Activated CD4-positive, alpha-beta T cell treated with anti-CD3 and anti-CD28 coated beads for 36 hours (primary cell): ENCODE measurements at regions of chr2 and their contacts with region 1.

Region 1: DNA sequence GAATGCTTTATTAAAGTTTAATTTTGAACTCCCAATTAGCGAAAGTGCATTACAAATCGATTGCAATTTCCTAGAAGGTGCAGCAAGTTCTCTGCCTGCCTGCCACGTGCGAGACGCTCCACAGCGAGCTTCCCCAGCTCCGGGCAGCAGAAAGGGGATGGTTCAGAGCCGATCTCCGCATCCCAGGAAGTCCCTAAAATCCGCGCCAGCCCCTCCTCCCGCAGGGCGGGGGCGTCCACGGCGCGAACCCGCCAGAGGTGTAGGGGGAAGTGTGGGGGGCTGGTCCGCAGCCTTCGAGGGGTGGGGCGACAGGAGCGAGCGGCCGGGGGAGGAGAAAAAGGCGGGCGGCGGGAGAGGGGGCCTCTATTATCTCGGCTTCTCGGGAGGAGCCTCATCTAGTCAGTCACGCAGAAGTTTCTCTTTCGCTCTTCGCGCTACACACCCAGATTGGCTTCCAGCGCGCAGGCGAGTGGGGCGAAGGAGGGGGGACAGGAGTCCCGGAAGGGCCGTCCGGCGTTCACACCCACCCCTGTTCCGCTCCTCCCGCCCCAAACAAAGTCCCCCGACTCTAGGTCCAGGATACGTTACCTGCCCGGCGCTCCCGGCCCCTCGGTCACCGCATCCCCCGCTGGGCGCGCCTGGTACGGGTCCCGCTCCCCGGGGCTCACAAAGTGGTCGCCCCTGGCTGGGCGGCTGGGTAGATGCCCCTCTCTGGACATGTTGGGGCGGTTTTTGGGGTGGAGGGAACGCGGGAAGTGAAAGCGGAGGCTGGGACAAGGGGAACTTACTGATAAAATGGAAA is 9.1 kb upstream of the NR4A2 start:
- DNase-seq: peak; percentile 94
- ATAC-seq: peak; percentile 79
- H3K4me3 Mint-ChIP-seq: peak overlapping the region; percentile 84
- H3K27ac Mint-ChIP-seq: peak overlapping the region; percentile 95
- H3K4me1 Mint-ChIP-seq: peaks cover 53% of the 10 kb centered on the region
- H3K27me3 Mint-ChIP-seq: no peaks in the 10 kb centered on the region

Region 2: GRCh38 chr2:156077041-156077735 is 264.5 kb before region 1 on chr2:
- CTCF ChIA-PET with region 1: no interaction called
- POLR2A ChIA-PET with region 1: no interaction called
- intact Hi-C with region 1: no loop called
- DNase-seq: no peak
- ATAC-seq: no peak
- H3K4me3 Mint-ChIP-seq: no peak overlapping the region
- H3K27ac Mint-ChIP-seq: no peak overlapping the region
- H3K4me1 Mint-ChIP-seq: no peaks in the 10 kb centered on the region
- H3K27me3 Mint-ChIP-seq: no peaks in the 10 kb centered on the region

Region 3: DNA sequence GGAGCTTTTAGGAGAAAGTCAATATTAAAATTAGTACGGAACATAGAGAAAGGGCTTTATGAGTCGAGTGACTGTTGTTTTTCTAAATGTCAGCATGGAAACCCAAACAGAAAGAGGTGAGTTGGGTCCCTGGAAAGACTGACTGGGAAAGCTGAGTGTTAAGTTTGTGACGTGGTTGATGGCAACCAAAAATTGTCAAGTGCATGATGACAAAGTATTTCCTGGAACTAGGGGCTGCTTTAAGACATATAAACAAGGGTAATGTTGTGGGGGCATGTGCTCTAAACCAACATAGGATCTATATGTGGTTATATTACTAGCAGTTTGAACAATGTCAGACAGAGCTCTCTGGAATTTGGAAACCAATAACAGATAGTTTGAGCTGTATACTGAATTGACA is 43.6 kb after region 1 on chr2:
- CTCF ChIA-PET with region 1: interaction called, 7 read pairs
- POLR2A ChIA-PET with region 1: interaction called, 7 read pairs
- intact Hi-C with region 1: loop called (anchors 1 to 2 kb)
- DNase-seq: peak; percentile 43
- ATAC-seq: peak; percentile 85
- H3K4me3 Mint-ChIP-seq: peak overlapping the region; percentile 14
- H3K27ac Mint-ChIP-seq: peak overlapping the region; percentile 82
- H3K4me1 Mint-ChIP-seq: peaks cover 29% of the 10 kb centered on the region
- H3K27me3 Mint-ChIP-seq: peaks cover 2% of the 10 kb centered on the region